Caco-2 (cell line): ENCODE measurements at regions of chr10 and their contacts with region 1.

Region 1: GRCh38 chr10:21278491-21279239 is 246.8 kb downstream of the SKIDA1 start:
- DNase-seq: peak; percentile 96 to 97
- H3K4me3 ChIP-seq: no peak overlapping the region
- H3K4me3 Mint-ChIP-seq: no peak overlapping the region
- H3K27ac Mint-ChIP-seq: peak overlapping the region; percentile 50
- H3K4me1 ChIP-seq: peaks cover 29% of the 10 kb centered on the region
- H3K4me1 Mint-ChIP-seq: peaks cover 34% of the 10 kb centered on the region
- H3K27me3 ChIP-seq: no peaks in the 10 kb centered on the region
- H3K27me3 Mint-ChIP-seq: no peaks in the 10 kb centered on the region
- CTCF ChIP-seq: peak; percentile 89 to 95

Region 2: DNA sequence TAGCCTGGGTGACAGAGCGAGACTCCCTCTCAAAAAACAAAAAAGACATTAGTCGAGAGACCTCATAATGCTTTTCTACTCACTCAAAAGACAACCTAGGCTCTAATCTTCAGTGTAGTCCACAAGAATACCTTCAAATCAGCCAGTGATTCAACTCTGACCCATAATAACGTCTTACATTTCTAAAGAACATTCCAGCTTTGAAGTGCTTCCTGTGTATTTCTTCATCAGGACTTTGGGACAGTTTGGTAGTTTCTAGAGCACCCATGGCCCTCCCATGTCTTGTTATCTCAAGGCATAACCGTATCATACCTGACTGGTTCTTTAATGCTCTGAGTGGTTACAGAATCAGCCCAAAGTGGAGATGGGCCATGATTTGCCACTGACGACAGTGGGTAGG is 25.5 kb after region 1 on chr10:
- CTCF ChIA-PET with region 1: no interaction called
- POLR2A ChIA-PET with region 1: no interaction called
- intact Hi-C with region 1: loop called (anchors 1 kb)
- DNase-seq: peak; percentile 83 to 86
- H3K4me3 ChIP-seq: no peak overlapping the region
- H3K4me3 Mint-ChIP-seq: peak overlapping the region; percentile 46
- H3K27ac Mint-ChIP-seq: peak overlapping the region; percentile 93
- H3K4me1 ChIP-seq: peaks cover 27% of the 10 kb centered on the region
- H3K4me1 Mint-ChIP-seq: peaks cover 41% of the 10 kb centered on the region
- H3K27me3 ChIP-seq: no peaks in the 10 kb centered on the region
- H3K27me3 Mint-ChIP-seq: no peaks in the 10 kb centered on the region
- CTCF ChIP-seq: no peak

Region 3: DNA sequence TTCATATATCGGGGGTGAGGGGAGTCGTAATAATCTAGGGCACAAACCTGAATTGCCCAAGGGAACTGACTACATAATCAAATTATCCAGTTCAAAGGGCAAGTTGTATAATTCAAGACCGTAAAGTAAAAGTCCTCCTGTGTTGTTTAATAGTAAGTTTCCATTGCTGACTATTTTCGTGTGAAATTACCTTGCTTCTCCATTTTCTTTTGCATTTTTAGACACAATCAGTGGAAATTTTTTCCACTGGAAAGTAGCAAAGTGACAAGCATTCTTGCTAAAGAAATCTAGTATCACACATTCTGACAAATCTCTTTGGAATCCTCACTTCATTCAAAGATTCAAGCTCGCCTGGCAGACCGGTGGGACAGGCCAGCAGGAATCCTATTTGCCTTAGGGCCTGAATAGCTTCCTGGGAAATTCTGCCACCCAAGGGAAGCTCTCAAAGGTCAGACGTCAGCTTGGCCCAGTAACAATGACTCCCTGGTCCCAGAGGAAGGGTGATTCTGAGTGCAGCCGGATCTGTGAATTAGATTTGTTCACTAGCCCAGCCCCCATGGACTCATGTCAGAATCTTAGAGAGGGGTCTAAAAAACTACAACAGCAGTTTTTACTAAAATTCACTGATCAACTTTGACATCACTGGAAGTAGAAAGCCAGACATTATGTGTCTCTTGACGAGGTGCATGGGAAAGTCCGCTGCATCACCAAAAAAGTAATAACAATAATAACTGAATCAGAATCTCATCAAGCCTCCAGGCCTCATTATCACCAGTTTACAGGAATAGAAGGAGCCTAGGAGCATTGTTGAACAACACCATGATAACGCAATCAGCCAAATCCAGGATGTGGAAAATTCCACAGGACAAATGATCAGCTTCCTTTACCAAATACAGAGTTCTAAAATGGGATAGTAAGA is 85.8 kb after region 1 on chr10:
- CTCF ChIA-PET with region 1: no interaction called
- POLR2A ChIA-PET with region 1: no interaction called
- intact Hi-C with region 1: loop called (anchors 1 kb)
- DNase-seq: peak; percentile 94 to 95
- H3K4me3 ChIP-seq: no peak overlapping the region
- H3K4me3 Mint-ChIP-seq: peak overlapping the region; percentile 68
- H3K27ac Mint-ChIP-seq: peak overlapping the region; percentile 93
- H3K4me1 ChIP-seq: peaks cover 76% of the 10 kb centered on the region
- H3K4me1 Mint-ChIP-seq: peaks cover 49% of the 10 kb centered on the region
- H3K27me3 ChIP-seq: no peaks in the 10 kb centered on the region
- H3K27me3 Mint-ChIP-seq: no peaks in the 10 kb centered on the region
- CTCF ChIP-seq: no peak

Region 4: GRCh38 chr10:21584834-21585530 is 306.3 kb after region 1 on chr10:
- CTCF ChIA-PET with region 1: no interaction called
- POLR2A ChIA-PET with region 1: no interaction called
- intact Hi-C with region 1: no loop called
- DNase-seq: no peak
- H3K4me3 ChIP-seq: no peak overlapping the region
- H3K4me3 Mint-ChIP-seq: no peak overlapping the region
- H3K27ac Mint-ChIP-seq: no peak overlapping the region
- H3K4me1 ChIP-seq: peaks cover 9% of the 10 kb centered on the region; the same call in 1 of the 2 replicates
- H3K4me1 Mint-ChIP-seq: peaks cover 24% of the 10 kb centered on the region
- H3K27me3 ChIP-seq: no peaks in the 10 kb centered on the region
- H3K27me3 Mint-ChIP-seq: no peaks in the 10 kb centered on the region
- CTCF ChIP-seq: no peak

Region 5: GRCh38 chr10:21634599-21635365 is 356.1 kb after region 1 on chr10:
- CTCF ChIA-PET with region 1: no interaction called
- POLR2A ChIA-PET with region 1: no interaction called
- intact Hi-C with region 1: loop called (anchors 10 kb)
- DNase-seq: no peak
- H3K4me3 ChIP-seq: no peak overlapping the region
- H3K4me3 Mint-ChIP-seq: no peak overlapping the region
- H3K27ac Mint-ChIP-seq: no peak overlapping the region
- H3K4me1 ChIP-seq: peaks cover 10% of the 10 kb centered on the region; the same call in 1 of the 2 replicates
- H3K4me1 Mint-ChIP-seq: peaks cover 28% of the 10 kb centered on the region
- H3K27me3 ChIP-seq: no peaks in the 10 kb centered on the region
- H3K27me3 Mint-ChIP-seq: no peaks in the 10 kb centered on the region
- CTCF ChIP-seq: no peak

Region 6: DNA sequence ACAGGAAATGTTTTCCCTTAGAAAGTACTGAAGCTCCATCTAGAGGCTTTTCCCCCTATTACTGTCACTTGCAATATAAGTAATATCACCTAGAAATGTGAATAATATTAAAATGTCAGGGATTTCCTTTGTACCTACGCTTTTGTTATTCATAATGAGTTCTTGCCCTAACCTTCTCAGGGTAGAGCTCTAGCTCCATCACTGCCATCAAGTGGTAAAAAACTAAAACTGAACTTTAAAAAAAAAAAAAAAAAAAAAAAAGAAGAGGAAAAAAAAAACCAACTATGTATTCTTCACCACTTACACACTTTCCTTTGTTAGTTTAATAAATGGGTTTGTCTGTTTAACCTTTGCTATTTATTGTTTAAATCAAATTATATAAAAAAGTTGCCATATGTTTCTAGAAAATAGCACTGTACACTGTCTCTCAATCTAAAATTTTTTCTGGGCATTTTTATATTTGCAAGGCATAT is 675.0 kb after region 1 on chr10:
- CTCF ChIA-PET with region 1: interaction called, 3 read pairs
- POLR2A ChIA-PET with region 1: no interaction called
- intact Hi-C with region 1: loop called (anchors 5 kb)
- DNase-seq: peak in 1 of 2 experiments; percentile 28
- H3K4me3 ChIP-seq: no peak overlapping the region
- H3K4me3 Mint-ChIP-seq: no peak overlapping the region
- H3K27ac Mint-ChIP-seq: no peak overlapping the region
- H3K4me1 ChIP-seq: no peaks in the 10 kb centered on the region
- H3K4me1 Mint-ChIP-seq: no peaks in the 10 kb centered on the region
- H3K27me3 ChIP-seq: no peaks in the 10 kb centered on the region
- H3K27me3 Mint-ChIP-seq: no peaks in the 10 kb centered on the region
- CTCF ChIP-seq: peak; percentile 41 to 62